PC-9 (cell line): ENCODE measurements at regions of chr6 and their contacts with region 1.

Region 1: DNA sequence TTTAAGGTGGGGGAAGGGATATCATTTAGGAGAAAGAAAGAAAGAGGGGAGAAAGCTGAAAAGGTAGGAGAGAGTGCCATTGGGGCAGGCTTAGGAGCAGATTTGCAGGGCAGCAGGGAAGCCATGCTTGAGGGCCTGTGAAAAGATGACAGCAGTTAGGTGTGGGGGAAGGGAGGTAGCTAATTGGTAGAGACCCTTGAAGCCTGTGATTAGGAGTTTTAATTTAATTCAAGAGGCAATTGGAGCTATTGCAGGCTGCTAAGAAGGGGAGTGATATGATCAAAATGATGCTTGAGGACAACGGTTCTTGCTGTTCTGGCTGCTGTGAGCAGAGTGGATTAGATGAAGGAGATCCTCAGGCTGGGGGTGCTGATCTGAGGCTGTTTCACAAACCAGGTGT is 24.5 kb upstream of the SEC63 start:
- DNase-seq: no peak
- H3K4me3 ChIP-seq: no peak overlapping the region
- H3K27ac ChIP-seq: no peak overlapping the region
- H3K4me1 ChIP-seq: no peaks in the 10 kb centered on the region
- H3K27me3 ChIP-seq: no peaks in the 10 kb centered on the region
- CTCF ChIP-seq: no peak

Region 2: DNA sequence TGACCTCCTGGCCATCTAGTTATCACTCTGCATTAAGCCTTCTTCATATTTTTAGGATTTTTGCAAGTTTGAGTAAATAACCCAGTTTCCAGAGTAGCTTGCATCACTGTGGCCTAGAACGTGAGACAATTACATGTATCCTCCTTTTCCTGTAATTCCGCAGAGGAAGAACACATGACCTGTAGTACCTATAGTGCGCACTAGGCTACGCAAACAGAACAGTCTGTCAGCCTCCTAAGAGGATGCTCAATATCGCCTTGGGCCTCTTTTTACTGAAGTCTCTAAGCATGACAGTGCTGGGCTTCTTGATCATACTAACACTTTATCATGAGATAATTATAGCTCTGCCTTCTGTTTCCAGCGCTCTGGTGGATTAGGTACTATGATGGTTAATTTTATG is 163.2 kb after region 1 on chr6:
- CTCF ChIA-PET with region 1: interaction called, 10 read pairs
- POLR2A ChIA-PET with region 1: no interaction called
- intact Hi-C with region 1: no loop called
- DNase-seq: no peak
- H3K4me3 ChIP-seq: no peak overlapping the region
- H3K27ac ChIP-seq: no peak overlapping the region
- H3K4me1 ChIP-seq: no peaks in the 10 kb centered on the region
- H3K27me3 ChIP-seq: no peaks in the 10 kb centered on the region
- CTCF ChIP-seq: no peak

Region 3: GRCh38 chr6:108736832-108737231 is 754.3 kb after region 1 on chr6:
- CTCF ChIA-PET with region 1: no interaction called
- POLR2A ChIA-PET with region 1: no interaction called
- intact Hi-C with region 1: no loop called
- DNase-seq: peak; percentile 79 to 93
- H3K4me3 ChIP-seq: peak overlapping the region; percentile 59
- H3K27ac ChIP-seq: peak overlapping the region; percentile 99
- H3K4me1 ChIP-seq: peaks cover 91% of the 10 kb centered on the region
- H3K27me3 ChIP-seq: no peaks in the 10 kb centered on the region
- CTCF ChIP-seq: no peak